ENCODE measurements at regions of chr11 and their contacts with region 1.

Region 1: GRCh38 chr11:72024069-72024754 is 25.5 kb downstream of the IL18BP start:
- DNase-seq: no peak
- ATAC-seq: no peak
- H3K4me3 ChIP-seq: no peak overlapping the region
- H3K27ac ChIP-seq: no peak overlapping the region
- H3K4me1 ChIP-seq: no peaks in the 10 kb centered on the region
- H3K27me3 ChIP-seq: no peaks in the 10 kb centered on the region
- CTCF ChIP-seq: no peak
- EP300 ChIP-seq: no peak
- POLR2A ChIP-seq: no peak
- RAD21 ChIP-seq: no peak

Region 2: GRCh38 chr11:72080256-72080974 is 56.2 kb after region 1 on chr11 and contains the starts of genes LRRC51 and NUMA1:
- CTCF ChIA-PET with region 1: interaction called, 43 read pairs
- POLR2A ChIA-PET with region 1: interaction called, 4 read pairs
- RAD21 ChIA-PET with region 1: interaction called, 30 read pairs
- SMC1A ChIA-PET with region 1: interaction called, 62 read pairs
- in situ Hi-C with region 1: no loop called
- intact Hi-C with region 1: no loop called
- DNase-seq: peak; percentile 99
- ATAC-seq: peak; percentile 97
- H3K4me3 ChIP-seq: peak within 1 kb of the TSS; percentile 77
- H3K27ac ChIP-seq: peak within 1 kb of the TSS; percentile 78
- H3K4me1 ChIP-seq: peaks cover 16% of the 10 kb centered on the region
- H3K27me3 ChIP-seq: no peaks in the 10 kb centered on the region
- CTCF ChIP-seq: no peak
- EP300 ChIP-seq: no peak
- POLR2A ChIP-seq: peak; percentile 83
- RAD21 ChIP-seq: no peak
- polyA plus RNA-seq, gene LRRC51: 4.7 to 6.2 TPM
- polyA plus RNA-seq, gene NUMA1: 5.5 to 7.1 TPM

Region 3: GRCh38 chr11:72085621-72086351 is 61.6 kb after region 1 on chr11:
- CTCF ChIA-PET with region 1: interaction called, 416 read pairs
- POLR2A ChIA-PET with region 1: interaction called, 14 read pairs
- RAD21 ChIA-PET with region 1: interaction called, 112 read pairs
- SMC1A ChIA-PET with region 1: interaction called, 245 read pairs
- in situ Hi-C with region 1: no loop called
- intact Hi-C with region 1: no loop called
- DNase-seq: no peak
- ATAC-seq: no peak
- H3K4me3 ChIP-seq: no peak overlapping the region
- H3K27ac ChIP-seq: no peak overlapping the region
- H3K4me1 ChIP-seq: peaks cover 10% of the 10 kb centered on the region
- H3K27me3 ChIP-seq: no peaks in the 10 kb centered on the region
- CTCF ChIP-seq: no peak
- EP300 ChIP-seq: no peak
- POLR2A ChIP-seq: no peak
- RAD21 ChIP-seq: no peak

Region 4: GRCh38 chr11:72112321-72113219 is 88.4 kb after region 1 on chr11 and contains the start of gene ANAPC15:
- CTCF ChIA-PET with region 1: interaction called, 6 read pairs
- POLR2A ChIA-PET with region 1: no interaction called
- RAD21 ChIA-PET with region 1: interaction called, 3 read pairs
- SMC1A ChIA-PET with region 1: interaction called, 10 read pairs
- in situ Hi-C with region 1: no loop called
- intact Hi-C with region 1: no loop called
- DNase-seq: peak; percentile 99
- ATAC-seq: peak; percentile 96
- H3K4me3 ChIP-seq: peak within 1 kb of the TSS; percentile 69
- H3K27ac ChIP-seq: peak within 1 kb of the TSS; percentile 99
- H3K4me1 ChIP-seq: peaks cover 7% of the 10 kb centered on the region
- H3K27me3 ChIP-seq: no peaks in the 10 kb centered on the region
- CTCF ChIP-seq: no peak
- EP300 ChIP-seq: no peak
- POLR2A ChIP-seq: peak; percentile 99
- RAD21 ChIP-seq: no peak
- polyA plus RNA-seq, gene ANAPC15: 230 to 372 TPM

Region 5: DNA sequence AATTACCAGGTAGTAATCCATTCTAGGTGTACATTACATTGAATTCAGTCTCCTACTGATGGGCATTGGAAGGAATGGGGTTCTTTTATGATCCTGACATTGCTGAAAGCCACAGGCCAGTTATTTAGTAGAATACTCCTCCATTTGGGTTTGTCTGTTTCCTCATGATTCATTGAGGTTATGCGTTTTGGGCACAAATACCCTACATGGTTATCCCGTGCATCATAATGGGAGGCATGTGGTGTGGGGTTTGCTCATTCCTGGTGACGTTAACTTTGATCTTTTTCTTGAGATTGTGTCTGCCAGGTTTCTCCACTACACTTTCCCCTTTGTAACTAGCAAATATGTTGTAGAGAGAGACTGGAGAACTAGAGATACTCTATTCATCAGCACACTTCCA is 116.9 kb after region 1 on chr11:
- CTCF ChIA-PET with region 1: interaction called, 101 read pairs
- POLR2A ChIA-PET with region 1: interaction called, 3 read pairs
- RAD21 ChIA-PET with region 1: interaction called, 48 read pairs
- SMC1A ChIA-PET with region 1: interaction called, 44 read pairs
- in situ Hi-C with region 1: loop called (anchors 5 kb)
- intact Hi-C with region 1: loop called (anchors 1 kb)
- DNase-seq: no peak
- ATAC-seq: no peak
- H3K4me3 ChIP-seq: no peak overlapping the region
- H3K27ac ChIP-seq: no peak overlapping the region
- H3K4me1 ChIP-seq: no peaks in the 10 kb centered on the region
- H3K27me3 ChIP-seq: no peaks in the 10 kb centered on the region; a peak in 1 of 4 replicates
- CTCF ChIP-seq: no peak
- EP300 ChIP-seq: no peak
- POLR2A ChIP-seq: no peak
- RAD21 ChIP-seq: no peak

Region 6: DNA sequence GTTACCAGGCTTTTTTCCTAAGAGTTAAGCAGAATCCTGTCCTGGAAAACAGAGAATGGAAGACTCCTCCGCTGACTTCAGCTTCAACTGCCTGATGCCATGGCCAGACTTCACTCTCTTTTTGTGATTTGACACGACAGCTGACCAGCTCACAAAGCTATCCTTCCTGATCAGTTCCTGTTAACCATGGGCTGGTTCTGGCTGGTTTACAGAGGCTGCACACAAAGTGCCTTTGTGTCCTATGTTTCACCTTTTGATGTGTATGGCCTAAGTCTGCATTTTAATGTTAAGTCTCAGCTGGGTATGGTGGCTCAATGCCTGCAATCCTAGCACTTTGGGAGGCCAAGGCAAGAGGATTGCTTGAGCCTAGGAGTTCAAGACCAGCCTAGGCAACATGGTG is 122.4 kb after region 1 on chr11:
- CTCF ChIA-PET with region 1: interaction called, 101 read pairs
- POLR2A ChIA-PET with region 1: interaction called, 3 read pairs
- RAD21 ChIA-PET with region 1: interaction called, 48 read pairs
- SMC1A ChIA-PET with region 1: interaction called, 44 read pairs
- in situ Hi-C with region 1: loop called (anchors 5 kb)
- intact Hi-C with region 1: loop called (anchors 1 kb)
- DNase-seq: no peak
- ATAC-seq: no peak
- H3K4me3 ChIP-seq: no peak overlapping the region
- H3K27ac ChIP-seq: no peak overlapping the region
- H3K4me1 ChIP-seq: no peaks in the 10 kb centered on the region
- H3K27me3 ChIP-seq: no peaks in the 10 kb centered on the region; a peak in 1 of 4 replicates
- CTCF ChIP-seq: no peak
- EP300 ChIP-seq: no peak
- POLR2A ChIP-seq: no peak
- RAD21 ChIP-seq: no peak